A549 (cell line): ENCODE measurements at regions of chr16 and their contacts with region 1.

Region 1: GRCh38 chr16:30370444-30371247 is at the start of gene TBC1D10B:
- DNase-seq: peak; percentile 100
- ATAC-seq: peak; percentile 87 to 94
- H3K4me3 ChIP-seq: peak within 1 kb of the TSS; percentile 76
- H3K27ac ChIP-seq: peak within 1 kb of the TSS; percentile 96 to 98
- H3K4me1 ChIP-seq: peaks cover 20% of the 10 kb centered on the region
- CTCF ChIP-seq: no peak
- EP300 ChIP-seq: no peak
- POLR2A ChIP-seq: peak; percentile 31
- RAD21 ChIP-seq: no peak
- polyA plus RNA-seq, gene TBC1D10B: 10.9 and 12.6 TPM in 2 replicates

Region 2: GRCh38 chr16:30355144-30355894 is 15.3 kb before region 1 on chr16 and contains the start of gene CD2BP2:
- CTCF ChIA-PET with region 1: interaction called, 10 read pairs
- POLR2A ChIA-PET with region 1: interaction called, 17 read pairs
- DNase-seq: peak; percentile 95 to 100
- ATAC-seq: peak; percentile 85 to 91
- H3K4me3 ChIP-seq: peak within 1 kb of the TSS; percentile 70
- H3K27ac ChIP-seq: peak within 1 kb of the TSS; percentile 87 to 96
- H3K4me1 ChIP-seq: peaks cover 50% of the 10 kb centered on the region
- CTCF ChIP-seq: no peak
- EP300 ChIP-seq: no peak; a peak in 1 of 5 replicates
- POLR2A ChIP-seq: 0 out of 2 replicates have a peak, but pooled peaks have one; percentile 31
- RAD21 ChIP-seq: 0 out of 5 replicates have a peak, but pooled peaks of 1 of the 2 experiments have one; percentile 20
- polyA plus RNA-seq, gene CD2BP2: 33.9 and 35.6 TPM in 2 replicates